AG04450 (cell line): ENCODE measurements at regions of chr10 and their contacts with region 1.

Region 1: GRCh38 chr10:104308439-104308903 is 29.8 kb downstream of the ITPRIP start:
- DNase-seq: no peak
- H3K4me3 ChIP-seq: no peak overlapping the region
- H3K27ac ChIP-seq: no peak overlapping the region
- H3K27me3 ChIP-seq: no peaks in the 10 kb centered on the region
- CTCF ChIP-seq: no peak

Region 2: DNA sequence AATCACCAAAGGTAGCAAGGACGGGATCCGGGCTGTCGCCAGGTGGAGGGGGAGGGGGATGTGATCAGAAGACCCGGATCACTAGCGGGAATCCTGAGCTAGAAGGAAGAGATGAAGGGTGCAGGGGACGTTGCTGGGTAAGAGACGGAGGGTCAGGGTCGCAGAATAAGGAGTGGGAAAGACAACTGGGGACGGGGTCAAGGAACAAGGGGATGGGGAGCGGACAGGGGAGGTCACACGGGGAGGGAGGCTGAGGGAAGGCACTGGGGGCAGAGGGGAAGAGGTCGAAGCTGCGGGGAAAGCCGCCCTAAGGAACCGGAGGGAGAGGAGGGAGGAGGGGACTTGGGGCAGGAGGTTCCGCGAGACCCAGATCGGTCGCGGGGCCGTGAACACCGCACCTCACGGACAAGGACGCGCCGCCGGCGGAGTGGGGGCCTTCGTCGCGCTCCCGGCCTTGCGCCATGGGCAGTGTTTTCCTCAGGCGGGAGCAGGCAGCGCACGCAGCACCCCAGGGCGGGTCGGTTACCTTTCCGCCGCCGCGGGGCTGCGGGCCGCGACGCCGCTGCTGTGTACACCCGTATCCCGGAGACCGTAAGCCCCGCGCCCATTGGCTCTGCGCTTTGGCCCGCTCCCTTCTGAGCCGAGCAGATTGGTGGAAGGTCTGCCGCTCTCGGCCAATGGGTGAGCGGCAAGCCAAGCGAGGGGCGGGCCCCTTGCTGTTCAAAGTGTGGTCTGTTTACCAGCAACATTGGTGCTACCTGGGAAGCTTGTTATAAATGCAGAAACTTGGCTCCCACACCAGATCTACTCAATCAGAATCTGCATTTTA is 76.5 kb before region 1 on chr10 and contains the start of gene CFAP43:
- CTCF ChIA-PET with region 1: no interaction called
- POLR2A ChIA-PET with region 1: no interaction called
- DNase-seq: peak; percentile 81
- H3K4me3 ChIP-seq: peak within 1 kb of the TSS; percentile 90
- H3K27ac ChIP-seq: no peak within 1 kb of the TSS
- H3K27me3 ChIP-seq: peaks cover 5% of the 10 kb centered on the region
- CTCF ChIP-seq: no peak
- polyA plus RNA-seq, gene CFAP43: 0.07 TPM in 1 of 2 replicates, not detected in the other

Region 3: DNA sequence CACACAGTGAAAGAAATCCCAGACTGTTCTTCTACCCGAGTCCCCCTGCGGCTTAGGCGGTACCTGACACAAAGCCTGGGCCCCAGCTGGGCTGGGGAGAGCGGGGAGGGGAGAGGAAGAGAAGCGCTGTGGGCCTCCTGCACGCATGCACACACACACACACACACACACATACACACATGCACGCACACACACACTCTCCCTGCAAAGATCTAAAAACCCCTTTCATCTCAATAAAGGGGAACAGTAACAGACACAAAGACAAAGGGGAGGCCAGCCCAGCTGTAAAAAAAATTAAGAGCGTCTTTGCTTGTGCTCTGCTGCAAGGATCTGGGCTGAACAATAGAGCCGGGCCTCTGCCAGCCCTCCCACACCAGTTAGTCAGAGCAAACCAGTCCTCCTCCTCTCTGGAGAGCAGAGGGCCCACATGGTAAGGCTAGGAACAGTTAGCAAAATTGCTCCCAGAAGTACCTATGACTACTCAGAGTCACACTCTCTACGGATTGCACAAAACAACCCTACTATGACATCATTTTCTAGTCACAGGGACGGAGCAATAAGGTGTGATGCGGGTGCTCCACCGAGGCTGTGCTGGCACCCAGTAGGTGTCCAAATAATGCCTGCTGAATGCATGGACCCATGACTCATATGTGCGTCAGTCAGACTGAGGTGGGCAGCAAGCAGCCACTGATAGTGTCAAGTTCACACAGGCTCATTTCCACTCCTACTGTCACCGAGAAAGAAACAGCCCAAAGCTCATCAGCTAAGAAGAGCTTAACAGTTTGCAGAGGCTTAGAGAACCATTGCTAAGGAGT is 20.6 kb after region 1 on chr10:
- CTCF ChIA-PET with region 1: interaction called, 10 read pairs
- POLR2A ChIA-PET with region 1: interaction called, 8 read pairs
- DNase-seq: no peak
- H3K4me3 ChIP-seq: peak overlapping the region; percentile 57
- H3K27ac ChIP-seq: peak overlapping the region; percentile 96
- H3K27me3 ChIP-seq: no peaks in the 10 kb centered on the region
- CTCF ChIP-seq: no peak

Region 4: DNA sequence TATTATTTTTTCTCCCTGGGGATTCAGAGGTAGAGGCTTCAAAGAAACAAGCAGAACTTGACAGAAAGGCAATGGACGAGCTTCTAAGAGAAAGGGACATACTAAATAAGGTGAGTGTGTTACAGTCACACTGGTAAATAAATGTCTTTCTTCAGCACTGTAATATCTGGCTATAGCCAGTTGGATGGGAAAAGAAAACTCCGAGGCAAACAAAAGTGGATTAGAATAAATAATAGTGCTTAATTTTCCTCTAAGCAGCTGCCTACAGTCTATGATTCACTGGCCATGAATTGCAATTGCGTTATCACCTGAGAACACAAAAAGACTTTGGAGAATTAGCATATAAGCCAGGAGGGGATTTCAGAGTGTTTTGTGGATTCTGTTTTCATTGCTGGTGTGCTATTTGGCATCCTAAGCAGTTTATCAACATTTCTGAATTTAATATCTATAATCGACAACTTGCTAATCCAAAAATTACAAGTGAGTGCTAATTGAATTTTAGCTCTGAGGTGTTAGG is 68.4 kb after region 1 on chr10:
- CTCF ChIA-PET with region 1: no interaction called
- POLR2A ChIA-PET with region 1: no interaction called
- DNase-seq: no peak
- H3K4me3 ChIP-seq: no peak overlapping the region
- H3K27ac ChIP-seq: no peak overlapping the region
- H3K27me3 ChIP-seq: no peaks in the 10 kb centered on the region
- CTCF ChIP-seq: no peak